ENCODE measurements at regions of chr2 and their contacts with region 1.

Region 1: DNA sequence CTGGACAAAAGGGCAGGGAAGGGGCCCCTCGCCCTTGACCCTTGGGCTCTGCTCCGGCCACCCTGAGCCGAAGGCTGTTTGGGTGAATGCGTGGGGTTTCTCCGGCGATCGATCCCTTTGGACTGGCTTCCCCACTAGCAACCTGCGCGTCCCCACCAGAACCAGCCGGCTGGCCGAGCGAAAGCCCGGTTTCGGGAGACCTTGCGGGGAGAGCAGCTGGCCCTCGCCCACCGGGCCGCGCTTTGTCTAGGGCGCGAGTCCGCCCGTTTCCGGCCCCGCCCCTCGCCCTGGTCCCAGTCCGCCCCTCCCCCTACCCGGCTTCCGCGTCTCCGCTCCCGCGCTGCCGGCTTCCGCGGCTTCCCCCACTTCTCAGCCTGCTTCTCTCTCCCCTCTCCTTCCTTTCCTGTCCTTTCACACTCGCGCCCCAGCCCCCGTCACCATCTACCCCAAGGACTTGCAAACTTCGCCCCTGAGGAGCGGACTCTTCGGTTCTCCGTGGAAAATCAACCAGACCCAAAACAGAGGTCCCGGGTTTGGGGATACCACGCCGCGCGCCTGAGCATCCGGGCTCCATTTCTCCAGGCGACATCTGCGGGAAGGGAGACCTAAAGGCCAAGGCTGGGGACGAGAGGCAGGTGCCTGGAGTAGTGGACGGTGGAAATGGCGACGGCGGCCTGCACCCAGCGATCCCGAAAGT is 48.0 kb upstream of the ATP6V1B1 start:
- DNase-seq: peak in 1 of 9 donors; percentile 56
- ATAC-seq: peak; percentile 60
- H3K4me3 ChIP-seq: peak overlapping the region; percentile 51
- H3K4me3 Mint-ChIP-seq: peak overlapping the region; percentile 72 to 85 (median 76)
- H3K27ac ChIP-seq: no peak overlapping the region
- H3K27ac Mint-ChIP-seq: peak overlapping the region in 1 of 9 donors; percentile 61
- H3K4me1 ChIP-seq: peaks cover 13 to 22% of the 10 kb centered on the region in 2 donors
- H3K4me1 Mint-ChIP-seq: peaks cover 24 to 31% (median 27%) of the 10 kb centered on the region in 7 donors
- H3K27me3 ChIP-seq: peaks cover 0 to 46% of the 10 kb centered on the region in 2 donors
- H3K27me3 Mint-ChIP-seq: peaks cover 77 to 95% (median 92%) of the 10 kb centered on the region in 5 donors

Region 2: GRCh38 chr2:70357684-70358071 is 530.0 kb before region 1 on chr2:
- CTCF ChIA-PET with region 1: no interaction called
- POLR2A ChIA-PET with region 1: no interaction called
- intact Hi-C with region 1: no loop called
- DNase-seq: no peak
- ATAC-seq: no peak
- H3K4me3 ChIP-seq: no peak overlapping the region
- H3K4me3 Mint-ChIP-seq: no peak overlapping the region
- H3K27ac ChIP-seq: no peak overlapping the region
- H3K27ac Mint-ChIP-seq: no peak overlapping the region
- H3K4me1 ChIP-seq: no peaks in the 10 kb centered on the region
- H3K4me1 Mint-ChIP-seq: peaks cover 0 to 9% (median 0%) of the 10 kb centered on the region in 7 donors
- H3K27me3 ChIP-seq: no peaks in the 10 kb centered on the region
- H3K27me3 Mint-ChIP-seq: peaks cover 0 to 30% (median 5%) of the 10 kb centered on the region in 5 donors

Region 3: GRCh38 chr2:70907130-70908057 is 19.7 kb after region 1 on chr2:
- CTCF ChIA-PET with region 1: no interaction called
- POLR2A ChIA-PET with region 1: no interaction called
- intact Hi-C with region 1: loop called in 1 of 2 experiments (anchors 1 kb)
- DNase-seq: peak in 1 of 9 donors; percentile 23
- ATAC-seq: no peak
- H3K4me3 ChIP-seq: no peak overlapping the region
- H3K4me3 Mint-ChIP-seq: peak overlapping the region in 9 of 10 donors; percentile 31 to 77 (median 73)
- H3K27ac ChIP-seq: no peak overlapping the region
- H3K27ac Mint-ChIP-seq: no peak overlapping the region
- H3K4me1 ChIP-seq: peaks cover 0 to 8% of the 10 kb centered on the region in 2 donors
- H3K4me1 Mint-ChIP-seq: peaks cover 4 to 19% (median 16%) of the 10 kb centered on the region in 7 donors
- H3K27me3 ChIP-seq: peaks cover 0 to 44% of the 10 kb centered on the region in 2 donors
- H3K27me3 Mint-ChIP-seq: peaks cover 73 to 88% (median 79%) of the 10 kb centered on the region in 5 donors

Region 4: GRCh38 chr2:72144632-72145288 is 1257.1 kb after region 1 on chr2:
- CTCF ChIA-PET with region 1: no interaction called
- POLR2A ChIA-PET with region 1: no interaction called
- intact Hi-C with region 1: loop called in 1 of 2 experiments (anchors 5 kb)
- DNase-seq: no peak
- ATAC-seq: peak; percentile 20
- H3K4me3 ChIP-seq: no peak overlapping the region
- H3K4me3 Mint-ChIP-seq: peak overlapping the region in 9 of 10 donors; percentile 47 to 88 (median 70)
- H3K27ac ChIP-seq: no peak overlapping the region
- H3K27ac Mint-ChIP-seq: no peak overlapping the region
- H3K4me1 ChIP-seq: peaks cover 4 to 7% of the 10 kb centered on the region in 2 donors
- H3K4me1 Mint-ChIP-seq: peaks cover 23 to 48% (median 39%) of the 10 kb centered on the region in 7 donors
- H3K27me3 ChIP-seq: peaks cover 6 to 15% of the 10 kb centered on the region in 2 donors
- H3K27me3 Mint-ChIP-seq: peaks cover 50 to 60% (median 58%) of the 10 kb centered on the region in 5 donors

Measured in naive thymus-derived CD4-positive, alpha-beta T cell (primary cell).